Mammary epithelial cell (primary cell): ENCODE measurements at regions of chr22 and their contacts with region 1.

Region 1: DNA sequence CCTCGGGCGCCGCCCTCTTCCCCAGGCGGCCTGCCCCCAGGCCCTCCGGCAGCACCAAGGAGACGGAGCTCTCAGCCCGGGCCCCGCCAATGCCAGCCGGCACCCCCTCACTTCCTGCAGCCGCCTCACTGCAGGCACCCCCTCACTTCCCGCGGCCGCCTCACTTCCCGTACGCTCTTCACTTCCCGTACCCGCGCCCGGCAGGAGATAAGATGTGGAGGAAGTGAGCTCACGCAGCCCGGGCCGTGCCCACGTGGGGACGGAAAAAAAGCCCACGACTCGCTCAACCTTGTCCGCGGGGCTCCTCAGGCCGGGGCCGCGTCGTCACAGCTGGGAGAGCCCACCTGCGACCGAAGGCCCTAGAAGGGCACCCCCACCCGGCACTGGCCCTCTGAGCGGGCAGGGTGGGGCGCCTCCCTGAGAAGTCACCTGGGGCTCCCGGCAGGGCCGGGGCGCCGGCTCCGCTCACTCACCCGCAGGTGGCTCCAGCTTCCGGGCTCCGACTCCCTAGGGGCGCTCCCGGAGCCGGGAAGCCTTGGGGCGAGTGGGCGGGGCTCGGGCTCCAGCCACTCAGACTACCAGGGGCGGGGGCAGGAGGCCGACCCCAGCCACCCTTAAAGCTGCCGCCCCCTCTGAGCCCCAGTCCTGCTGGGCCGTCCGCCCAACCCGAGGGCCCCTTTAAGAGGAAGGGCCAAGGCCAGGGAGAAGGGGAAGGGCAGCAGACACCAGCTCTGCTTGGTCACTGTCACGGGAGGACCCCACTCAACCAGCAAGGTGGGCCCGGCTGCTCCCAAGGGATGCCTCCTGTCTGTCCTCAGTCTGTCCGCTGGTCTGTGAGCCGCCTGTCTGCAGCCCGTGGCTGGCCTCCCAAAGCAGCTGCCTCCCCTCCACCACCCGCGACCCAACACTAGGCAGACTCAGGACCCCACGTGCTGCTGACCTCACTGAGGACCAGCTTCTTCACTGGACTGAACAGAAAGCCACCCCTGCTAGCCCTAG is 31.4 kb downstream of the PISD start:
- DNase-seq: peak; percentile 71
- H3K4me3 ChIP-seq: peak overlapping the region; percentile 57 to 79 (median 64)
- H3K27ac ChIP-seq: peak overlapping the region; percentile 66
- H3K4me1 ChIP-seq: peaks cover 13% of the 10 kb centered on the region
- H3K27me3 ChIP-seq: no peaks in the 10 kb centered on the region
- CTCF ChIP-seq: peak in 1 of 2 donors; percentile 18

Region 2: DNA sequence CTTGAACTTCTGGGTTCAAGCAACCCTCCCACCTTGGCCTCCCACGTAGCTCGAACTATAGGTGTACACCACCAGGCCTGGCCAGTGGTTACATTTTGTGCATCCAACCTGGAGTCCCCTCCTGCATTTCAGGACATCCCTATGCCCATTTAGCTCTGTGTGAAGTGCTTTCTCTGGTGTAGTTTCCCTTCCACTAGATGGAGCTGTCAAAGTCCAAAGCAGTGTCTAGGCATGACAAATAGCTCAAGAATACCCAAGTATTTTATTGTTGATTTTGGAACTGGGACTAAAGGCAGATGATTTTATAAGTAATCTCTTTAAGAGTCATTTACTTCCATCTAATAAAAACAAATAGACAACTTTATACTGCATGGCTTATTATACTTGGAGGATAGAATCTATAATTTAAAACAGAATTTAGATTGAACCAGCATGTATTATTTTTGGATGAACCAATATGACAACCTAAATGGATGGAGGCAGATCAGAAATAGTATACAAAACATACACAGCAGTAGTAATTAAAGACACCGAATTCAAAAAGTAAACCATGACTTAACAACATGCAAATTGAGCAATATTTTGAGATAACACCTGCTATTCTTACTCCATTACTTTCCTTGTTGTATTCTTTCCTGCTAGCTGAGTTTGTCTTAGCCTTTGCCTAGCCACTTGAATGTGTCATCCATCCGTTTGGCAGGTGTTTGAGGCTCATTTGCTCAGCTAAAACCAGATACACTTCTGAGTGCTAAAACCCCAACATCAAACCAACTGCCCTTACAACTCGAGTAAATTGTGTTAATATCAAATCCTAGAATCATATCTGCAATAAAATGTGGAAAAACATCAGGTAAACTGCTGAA is 178.7 kb before region 1 on chr22:
- CTCF ChIA-PET with region 1: no interaction called
- dilution Hi-C with region 1: no loop called
- in situ Hi-C with region 1: no loop called
- intact Hi-C with region 1: loop called (anchors 1 kb)
- DNase-seq: peak; percentile 44
- H3K4me3 ChIP-seq: no peak overlapping the region
- H3K27ac ChIP-seq: no peak overlapping the region
- H3K4me1 ChIP-seq: no peaks in the 10 kb centered on the region
- H3K27me3 ChIP-seq: no peaks in the 10 kb centered on the region
- CTCF ChIP-seq: peak; percentile 53 to 67

Region 3: DNA sequence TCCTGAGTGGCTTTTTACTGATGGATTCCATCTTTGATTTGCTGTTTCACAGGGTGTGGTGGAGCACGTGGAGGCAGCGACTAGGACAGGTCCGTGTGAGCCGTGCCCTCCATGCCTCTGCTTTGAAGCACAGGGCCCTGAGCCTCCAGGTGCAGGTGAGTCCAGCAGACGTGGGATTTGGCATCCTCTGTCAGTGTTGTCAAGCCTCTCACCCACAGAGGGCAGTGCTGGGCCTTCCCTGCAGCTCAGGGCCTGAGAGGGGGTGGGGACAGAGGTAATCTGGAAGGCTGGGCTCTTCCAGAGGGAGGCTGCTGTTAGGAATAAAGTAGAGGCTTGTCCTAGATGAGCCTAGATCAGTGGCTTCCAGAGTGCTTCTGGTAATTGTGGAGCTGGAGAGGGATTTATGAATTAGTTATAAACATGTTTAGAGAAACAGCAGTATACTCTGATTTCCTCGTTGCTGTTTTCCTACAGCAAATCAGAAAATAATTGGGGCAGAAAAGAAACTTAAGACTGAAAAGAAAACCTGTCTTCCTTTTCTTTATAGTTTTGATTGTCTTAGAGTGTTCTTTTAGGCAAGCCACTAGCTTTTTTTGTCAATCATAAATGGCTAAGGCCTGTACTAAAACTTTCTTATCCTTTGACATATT is 69.3 kb before region 1 on chr22:
- CTCF ChIA-PET with region 1: no interaction called
- dilution Hi-C with region 1: no loop called
- in situ Hi-C with region 1: no loop called
- intact Hi-C with region 1: loop called (anchors 1 kb)
- DNase-seq: peak; percentile 70
- H3K4me3 ChIP-seq: no peak overlapping the region
- H3K27ac ChIP-seq: no peak overlapping the region
- H3K4me1 ChIP-seq: no peaks in the 10 kb centered on the region
- H3K27me3 ChIP-seq: no peaks in the 10 kb centered on the region
- CTCF ChIP-seq: peak; percentile 76 to 94

Region 4: GRCh38 chr22:31692186-31692886 is 61.7 kb after region 1 on chr22:
- CTCF ChIA-PET with region 1: no interaction called
- dilution Hi-C with region 1: no loop called
- in situ Hi-C with region 1: no loop called
- intact Hi-C with region 1: no loop called
- DNase-seq: peak; percentile 69
- H3K4me3 ChIP-seq: no peak overlapping the region
- H3K27ac ChIP-seq: no peak overlapping the region
- H3K4me1 ChIP-seq: peaks cover 3% of the 10 kb centered on the region
- H3K27me3 ChIP-seq: no peaks in the 10 kb centered on the region
- CTCF ChIP-seq: peak in 1 of 2 donors; percentile 8

Region 5: DNA sequence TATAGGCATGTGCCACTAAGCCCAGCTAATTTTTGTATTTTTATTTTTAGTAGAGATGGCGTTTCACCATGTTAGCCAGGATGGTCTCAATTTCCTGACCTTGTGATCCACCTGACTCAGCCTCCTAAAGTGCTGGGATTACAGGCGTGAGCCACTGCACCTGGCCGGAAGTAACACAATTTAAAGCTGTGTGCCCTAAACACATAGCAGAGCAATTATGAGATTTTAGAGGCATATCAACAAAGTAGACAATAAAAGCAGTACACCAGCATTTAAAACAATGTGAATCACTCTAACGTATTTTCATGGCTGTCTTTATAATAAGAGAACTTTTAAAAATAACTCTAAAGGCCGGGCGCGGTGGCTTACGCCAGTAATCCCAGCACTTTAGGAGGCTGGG is 76.9 kb after region 1 on chr22:
- CTCF ChIA-PET with region 1: no interaction called
- dilution Hi-C with region 1: no loop called
- in situ Hi-C with region 1: no loop called
- intact Hi-C with region 1: no loop called
- DNase-seq: no peak
- H3K4me3 ChIP-seq: no peak overlapping the region
- H3K27ac ChIP-seq: no peak overlapping the region
- H3K4me1 ChIP-seq: no peaks in the 10 kb centered on the region
- H3K27me3 ChIP-seq: no peaks in the 10 kb centered on the region
- CTCF ChIP-seq: no peak

Region 6: GRCh38 chr22:31749636-31750364 is 119.2 kb after region 1 on chr22 and contains the start of gene PRR14L:
- CTCF ChIA-PET with region 1: no interaction called
- dilution Hi-C with region 1: no loop called
- in situ Hi-C with region 1: no loop called
- intact Hi-C with region 1: no loop called
- DNase-seq: peak; percentile 95
- H3K4me3 ChIP-seq: peak within 1 kb of the TSS; percentile 70 to 84 (median 72)
- H3K27ac ChIP-seq: peak within 1 kb of the TSS; percentile 73
- H3K4me1 ChIP-seq: peaks cover 23% of the 10 kb centered on the region
- H3K27me3 ChIP-seq: no peaks in the 10 kb centered on the region
- CTCF ChIP-seq: peak in 1 of 2 donors; percentile 3
- total RNA-seq, gene PRR14L: 28.7 to 39.3 TPM

Region 7: DNA sequence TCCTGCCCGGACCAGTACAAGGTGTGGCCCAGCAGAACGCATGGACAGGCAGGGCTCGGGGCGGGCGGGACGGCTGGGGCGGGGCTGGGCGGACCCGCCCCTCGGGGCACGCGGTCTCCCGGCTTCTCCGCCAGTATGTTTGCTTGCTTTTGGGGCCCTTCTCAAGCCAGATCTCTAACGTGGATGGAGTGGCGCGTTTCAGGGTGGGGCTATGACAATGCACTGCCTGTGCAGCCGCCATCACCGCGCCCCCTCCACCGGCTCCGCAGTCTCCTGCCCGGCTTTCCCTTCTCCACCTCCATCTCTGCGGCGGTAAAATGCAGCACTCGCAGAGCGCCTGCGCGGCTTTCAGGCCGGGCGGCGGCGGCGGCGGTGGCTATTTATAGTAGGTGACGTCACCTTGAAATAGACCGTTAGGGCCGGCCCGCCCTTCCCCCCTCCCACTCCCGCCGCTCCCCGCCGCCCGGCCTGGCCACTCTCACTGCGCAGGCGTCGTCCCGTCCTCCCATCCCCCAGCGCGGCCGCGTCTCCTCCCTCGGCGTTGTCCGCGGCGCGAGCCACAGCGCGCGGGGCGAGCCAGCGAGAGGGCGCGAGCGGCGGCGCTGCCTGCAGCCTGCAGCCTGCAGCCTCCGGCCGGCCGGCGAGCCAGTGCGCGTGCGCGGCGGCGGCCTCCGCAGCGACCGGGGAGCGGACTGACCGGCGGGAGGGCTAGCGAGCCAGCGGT is 313.5 kb after region 1 on chr22 and contains the start of gene YWHAH:
- CTCF ChIA-PET with region 1: no interaction called
- dilution Hi-C with region 1: no loop called
- in situ Hi-C with region 1: no loop called
- intact Hi-C with region 1: no loop called
- DNase-seq: peak; percentile 91
- H3K4me3 ChIP-seq: peak within 1 kb of the TSS; percentile 81 to 92 (median 91)
- H3K27ac ChIP-seq: peak within 1 kb of the TSS; percentile 86
- H3K4me1 ChIP-seq: peaks cover 21% of the 10 kb centered on the region
- H3K27me3 ChIP-seq: no peaks in the 10 kb centered on the region
- CTCF ChIP-seq: no peak
- total RNA-seq, gene YWHAH: 153 to 166 TPM